OCI-LY7 (cell line): ENCODE measurements at regions of chr11 and their contacts with region 1.

Region 1: GRCh38 chr11:73177778-73178577 is 35.9 kb upstream of the FCHSD2 start:
- DNase-seq: peak; percentile 94
- H3K4me3 ChIP-seq: no peak overlapping the region
- H3K27ac ChIP-seq: peak overlapping the region; percentile 41
- H3K4me1 ChIP-seq: peaks cover 43% of the 10 kb centered on the region
- CTCF ChIP-seq: peak; percentile 98

Region 2: DNA sequence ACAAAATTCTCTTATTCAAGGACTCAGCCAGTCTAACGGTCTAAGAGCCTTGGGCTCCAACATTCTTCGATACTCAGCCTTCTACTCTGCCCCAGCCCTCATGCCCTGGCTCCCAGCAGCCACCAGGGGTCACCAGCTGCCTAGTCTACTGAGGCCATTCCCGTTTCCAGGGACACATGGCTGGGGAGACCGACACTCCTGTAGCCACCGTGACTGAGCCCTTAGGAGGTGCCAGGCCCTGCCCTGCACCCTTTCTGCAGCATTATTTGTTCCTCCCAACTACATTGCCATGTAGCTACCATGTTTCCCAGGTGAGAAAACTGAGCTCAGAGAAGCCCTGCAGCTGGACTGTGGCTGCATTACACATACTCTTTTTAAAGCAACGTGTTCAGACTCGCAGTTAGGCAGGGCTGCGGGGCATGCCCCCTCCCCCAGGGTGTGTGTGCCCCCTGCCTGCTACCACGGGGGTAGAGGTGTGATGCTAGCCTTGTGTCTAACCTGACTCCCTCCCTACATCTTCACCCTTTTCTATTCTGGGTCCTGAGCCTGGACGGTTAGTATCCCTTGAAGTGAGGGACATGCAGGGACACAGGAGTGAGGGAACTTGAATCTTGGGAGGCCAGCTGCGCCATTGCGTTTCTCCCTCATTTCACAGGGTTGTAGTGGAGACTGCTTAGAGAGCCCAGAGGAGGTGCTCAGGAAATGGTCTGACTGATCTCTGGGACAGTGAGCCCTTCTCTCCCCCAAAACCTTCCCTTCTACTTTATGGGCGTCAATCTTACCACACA is 346.3 kb before region 1 on chr11:
- CTCF ChIA-PET with region 1: interaction called, 22 read pairs
- POLR2A ChIA-PET with region 1: interaction called, 5 read pairs
- intact Hi-C with region 1: loop called (anchors 1 kb)
- DNase-seq: peak; percentile 70
- H3K4me3 ChIP-seq: no peak overlapping the region
- H3K27ac ChIP-seq: peak overlapping the region; percentile 16
- H3K4me1 ChIP-seq: peaks cover 5% of the 10 kb centered on the region
- CTCF ChIP-seq: peak; percentile 87

Region 3: DNA sequence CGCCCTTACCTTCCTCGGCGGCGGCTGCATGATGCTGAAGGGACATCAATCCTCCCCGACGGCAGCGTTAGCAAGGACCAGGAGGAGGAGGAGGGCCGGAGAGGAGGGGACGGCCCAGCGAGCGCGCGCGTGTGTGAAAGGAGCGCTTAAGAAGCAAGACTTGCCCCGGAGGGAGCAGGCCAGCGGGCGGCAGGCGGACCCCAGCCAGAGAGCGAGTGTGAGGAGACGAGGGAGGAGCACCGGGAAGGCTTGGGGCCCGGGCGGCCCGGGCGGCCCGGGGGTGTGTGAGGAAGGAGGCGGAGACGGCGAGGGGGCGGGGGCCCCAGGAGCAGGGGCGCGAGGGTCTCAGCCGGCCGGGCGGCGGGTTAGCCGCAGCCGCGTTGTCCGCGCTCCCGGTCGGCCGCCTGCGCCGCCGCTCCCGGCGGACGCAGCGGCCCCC is 36.1 kb before region 1 on chr11:
- CTCF ChIA-PET with region 1: interaction called, 13 read pairs
- POLR2A ChIA-PET with region 1: interaction called, 136 read pairs
- intact Hi-C with region 1: loop called (anchors 1 kb)
- DNase-seq: peak; percentile 78
- H3K4me3 ChIP-seq: peak overlapping the region; percentile 80
- H3K27ac ChIP-seq: peak overlapping the region; percentile 97
- H3K4me1 ChIP-seq: peaks cover 68% of the 10 kb centered on the region
- CTCF ChIP-seq: no peak

Region 4: DNA sequence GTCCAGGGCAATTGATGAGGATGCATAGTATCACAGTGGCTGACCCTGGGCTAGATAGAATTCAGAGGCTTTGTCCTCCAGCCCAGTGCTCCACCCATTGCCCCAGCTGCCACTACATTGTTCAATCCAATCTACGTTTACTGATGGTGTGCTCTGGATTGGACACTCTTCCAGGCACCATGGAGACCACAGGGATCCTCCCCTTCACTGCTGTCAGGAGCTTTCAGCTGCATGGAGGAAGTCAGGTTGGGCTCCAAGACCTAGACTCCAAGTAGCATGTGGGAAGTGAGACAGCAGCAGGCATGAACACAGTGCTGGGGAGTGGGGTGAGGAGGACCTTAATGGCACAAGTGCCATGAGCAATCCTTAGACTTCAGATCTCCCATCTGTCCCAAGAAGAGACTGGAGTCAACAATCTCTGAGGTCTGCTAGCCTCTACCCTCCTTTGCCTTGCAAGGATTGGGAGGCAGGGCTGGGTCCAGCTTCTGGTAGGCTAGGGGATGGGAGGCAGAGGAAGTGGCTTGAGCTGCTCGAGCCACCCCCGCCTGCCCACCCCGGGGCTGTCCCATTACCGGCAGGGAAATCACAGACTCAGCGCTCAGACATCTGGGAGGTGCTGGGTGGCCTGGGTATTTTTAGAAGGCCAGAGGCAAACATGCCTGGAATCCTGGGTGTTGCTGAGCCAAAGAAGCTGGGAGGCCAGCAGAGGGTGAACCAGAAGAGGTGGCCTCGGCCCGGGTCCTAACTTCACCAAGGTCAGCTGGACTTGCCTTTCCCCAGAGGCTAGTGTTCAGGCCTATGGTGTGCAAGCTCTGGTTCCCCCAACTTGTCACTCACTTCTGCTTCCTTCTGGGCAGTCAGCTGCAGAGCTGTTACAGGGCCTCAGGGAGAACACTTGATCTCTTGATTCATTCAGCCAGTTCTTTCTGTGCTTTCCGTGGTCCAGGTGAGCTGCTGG is 20.6 kb before region 1 on chr11:
- CTCF ChIA-PET with region 1: interaction called, 18 read pairs
- POLR2A ChIA-PET with region 1: interaction called, 136 read pairs
- intact Hi-C with region 1: loop called (anchors 1 kb)
- DNase-seq: peak; percentile 77
- H3K4me3 ChIP-seq: peak overlapping the region; percentile 41
- H3K27ac ChIP-seq: peak overlapping the region; percentile 98
- H3K4me1 ChIP-seq: peaks cover 85% of the 10 kb centered on the region
- CTCF ChIP-seq: no peak

Region 5: DNA sequence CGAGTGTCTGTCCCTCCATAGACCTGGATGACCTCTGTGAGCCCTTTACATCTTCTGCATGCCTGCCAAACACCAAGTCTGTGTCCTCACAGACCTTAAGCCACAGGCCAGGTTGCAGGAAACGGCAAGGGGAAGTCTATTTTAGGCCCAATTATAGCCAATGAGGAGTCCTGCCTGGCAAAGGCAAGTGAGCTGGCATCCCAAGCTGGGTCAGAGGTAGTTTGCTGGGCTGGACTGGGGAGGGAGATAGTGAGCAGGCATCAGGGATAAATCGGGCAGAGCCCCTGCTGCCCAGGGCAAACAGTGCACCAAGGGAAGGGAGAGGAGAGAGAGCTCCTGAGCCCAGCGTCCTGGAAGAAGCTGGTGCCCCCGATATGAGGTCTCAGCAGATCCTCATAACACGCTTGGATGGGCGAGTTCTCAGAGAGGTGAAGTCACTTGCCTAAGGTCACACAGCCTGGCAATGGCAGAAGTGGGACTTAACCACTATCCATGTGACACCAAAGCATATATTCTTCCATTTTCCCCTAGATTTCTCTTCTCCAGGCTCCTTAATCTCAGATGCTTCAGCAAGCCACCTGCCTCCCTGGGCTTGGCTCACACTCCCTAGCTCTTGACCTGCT is 194.5 kb after region 1 on chr11:
- CTCF ChIA-PET with region 1: no interaction called
- POLR2A ChIA-PET with region 1: no interaction called
- intact Hi-C with region 1: no loop called
- DNase-seq: peak; percentile 61
- H3K4me3 ChIP-seq: no peak overlapping the region
- H3K27ac ChIP-seq: no peak overlapping the region
- H3K4me1 ChIP-seq: peaks cover 30% of the 10 kb centered on the region
- CTCF ChIP-seq: peak; percentile 68